Mammary epithelial cell (primary cell): ENCODE measurements at regions of chr12 and their contacts with region 1.

Region 1: DNA sequence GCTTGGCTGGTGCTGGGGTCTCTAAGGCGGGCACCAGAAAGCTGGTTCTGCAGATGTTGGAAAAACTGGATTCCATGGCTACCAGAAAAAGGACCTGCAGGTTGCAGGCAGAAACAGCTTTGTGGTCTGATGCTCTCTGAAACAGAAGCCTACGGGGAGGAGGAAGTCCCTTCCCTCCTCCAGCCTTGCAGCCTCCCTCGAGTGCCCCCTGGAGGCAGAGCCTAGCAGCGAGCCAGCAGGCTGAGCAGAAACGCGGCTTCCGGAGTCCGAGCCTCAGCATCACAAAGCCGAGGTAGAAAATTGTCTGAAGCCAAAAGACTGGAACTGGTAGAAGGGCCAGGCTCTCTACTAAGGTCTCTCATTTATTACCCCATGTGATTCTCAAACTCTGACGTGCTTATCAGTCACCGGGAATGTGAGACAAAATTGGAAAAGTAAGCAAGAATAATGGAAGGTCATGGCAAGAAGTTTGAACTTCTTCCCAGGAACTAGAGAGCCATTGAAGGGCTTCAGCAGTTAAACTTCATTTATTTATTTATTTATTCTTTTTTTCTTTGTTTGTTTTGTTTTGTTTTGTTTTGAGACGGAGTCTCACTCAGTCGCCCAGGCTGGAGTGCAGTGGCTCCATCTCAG is 82.2 kb upstream of the CPSF6 start:
- DNase-seq: peak; percentile 67
- H3K4me3 ChIP-seq: no peak overlapping the region
- H3K27ac ChIP-seq: no peak overlapping the region
- H3K4me1 ChIP-seq: no peaks in the 10 kb centered on the region
- H3K27me3 ChIP-seq: no peaks in the 10 kb centered on the region
- CTCF ChIP-seq: peak; percentile 97 to 99

Region 2: DNA sequence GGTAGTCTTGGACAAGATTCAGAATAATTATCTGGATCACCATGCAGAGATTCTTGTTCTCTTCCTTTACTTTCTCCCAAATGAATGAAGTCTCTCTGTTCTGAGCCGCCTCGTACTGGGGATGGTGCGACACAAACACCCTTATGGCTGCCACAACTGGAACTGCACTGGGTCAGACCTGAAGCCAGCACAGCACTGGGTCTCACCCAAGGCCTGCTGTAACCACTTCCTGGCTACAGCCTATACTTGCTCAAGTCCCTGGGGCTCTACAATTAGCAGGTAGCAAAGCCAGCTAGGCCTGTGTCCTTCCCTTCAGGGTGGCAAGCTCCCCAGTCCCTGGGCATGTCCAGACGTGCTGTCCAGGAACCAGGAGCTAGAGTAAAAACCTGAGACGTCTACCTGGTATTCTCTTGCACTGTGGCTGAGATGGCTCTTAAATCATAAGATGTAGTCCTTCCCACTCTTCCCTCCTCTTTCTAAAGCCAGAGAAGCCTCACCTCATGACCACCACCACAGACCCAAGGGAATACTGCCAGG is 1025.2 kb before region 1 on chr12:
- CTCF ChIA-PET with region 1: no interaction called
- dilution Hi-C with region 1: no loop called
- in situ Hi-C with region 1: no loop called
- intact Hi-C with region 1: no loop called
- DNase-seq: peak; percentile 71
- H3K4me3 ChIP-seq: no peak overlapping the region
- H3K27ac ChIP-seq: no peak overlapping the region
- H3K4me1 ChIP-seq: peaks cover 15% of the 10 kb centered on the region
- H3K27me3 ChIP-seq: no peaks in the 10 kb centered on the region
- CTCF ChIP-seq: no peak

Region 3: GRCh38 chr12:68865399-68866164 is 291.6 kb before region 1 on chr12:
- CTCF ChIA-PET with region 1: no interaction called
- dilution Hi-C with region 1: no loop called
- in situ Hi-C with region 1: no loop called
- intact Hi-C with region 1: loop called (anchors 2 kb)
- DNase-seq: no peak
- H3K4me3 ChIP-seq: no peak overlapping the region
- H3K27ac ChIP-seq: no peak overlapping the region
- H3K4me1 ChIP-seq: peaks cover 6% of the 10 kb centered on the region
- H3K27me3 ChIP-seq: no peaks in the 10 kb centered on the region
- CTCF ChIP-seq: no peak

Region 4: GRCh38 chr12:69123919-69124638 is 33.1 kb before region 1 on chr12:
- CTCF ChIA-PET with region 1: no interaction called
- dilution Hi-C with region 1: no loop called
- in situ Hi-C with region 1: no loop called
- intact Hi-C with region 1: no loop called
- DNase-seq: no peak
- H3K4me3 ChIP-seq: no peak overlapping the region
- H3K27ac ChIP-seq: no peak overlapping the region
- H3K4me1 ChIP-seq: no peaks in the 10 kb centered on the region
- H3K27me3 ChIP-seq: peaks cover 3% of the 10 kb centered on the region
- CTCF ChIP-seq: no peak

Region 5: GRCh38 chr12:69254046-69254445 is 96.9 kb after region 1 on chr12:
- CTCF ChIA-PET with region 1: interaction called, 8 read pairs
- dilution Hi-C with region 1: no loop called
- in situ Hi-C with region 1: no loop called
- intact Hi-C with region 1: loop called (anchors 1 kb)
- DNase-seq: peak; percentile 21
- H3K4me3 ChIP-seq: no peak overlapping the region
- H3K27ac ChIP-seq: no peak overlapping the region
- H3K4me1 ChIP-seq: no peaks in the 10 kb centered on the region
- H3K27me3 ChIP-seq: no peaks in the 10 kb centered on the region
- CTCF ChIP-seq: peak; percentile 56 to 59

Region 6: DNA sequence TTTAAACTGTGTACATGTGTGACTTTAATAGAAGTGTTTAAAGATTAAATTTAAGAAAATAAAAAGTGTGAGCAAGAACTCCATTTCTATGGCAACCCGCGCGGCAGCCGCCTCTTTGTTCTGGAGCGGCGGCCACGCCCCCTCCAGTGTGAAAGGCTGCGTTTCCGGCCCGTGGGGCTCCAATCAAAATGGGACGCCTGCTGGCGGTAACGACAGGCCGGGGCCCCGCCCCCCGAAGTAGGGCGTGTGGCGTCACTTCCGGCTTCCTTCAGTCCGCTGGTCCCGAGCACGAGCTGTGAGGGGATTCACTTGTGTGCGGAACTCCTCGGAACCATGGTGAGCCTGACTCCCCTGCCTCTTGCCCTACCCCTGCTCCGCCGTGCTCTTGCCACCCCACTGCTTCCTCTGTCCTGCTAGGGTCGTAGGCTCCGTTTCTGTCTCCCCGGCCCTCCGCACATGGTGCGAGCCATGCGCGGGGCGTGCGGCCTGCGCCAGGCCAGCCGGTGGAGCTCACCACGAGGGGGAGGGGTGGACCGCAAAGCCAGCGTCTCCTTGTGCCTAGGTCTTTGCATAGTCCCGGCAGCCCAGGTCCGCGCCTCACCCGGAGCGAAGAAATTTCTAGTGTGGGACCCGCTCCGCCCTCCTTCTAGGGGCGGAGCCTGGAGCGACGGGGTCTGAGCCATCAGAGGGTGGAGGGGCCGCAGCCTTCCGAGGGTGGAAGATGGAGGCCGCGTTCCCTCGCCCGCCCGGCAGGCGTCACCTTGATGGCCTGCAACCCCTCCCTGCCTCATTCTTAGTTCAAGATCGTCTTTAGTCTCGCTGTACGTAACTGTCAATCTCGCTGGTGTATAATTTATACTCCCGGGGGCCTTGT is 428.3 kb after region 1 on chr12 and contains the start of gene CCT2:
- CTCF ChIA-PET with region 1: no interaction called
- dilution Hi-C with region 1: no loop called
- in situ Hi-C with region 1: no loop called
- intact Hi-C with region 1: loop called (anchors 5 kb)
- DNase-seq: peak; percentile 90
- H3K4me3 ChIP-seq: peak within 1 kb of the TSS; percentile 75 to 96 (median 80)
- H3K27ac ChIP-seq: peak within 1 kb of the TSS; percentile 94
- H3K4me1 ChIP-seq: peaks cover 4% of the 10 kb centered on the region
- H3K27me3 ChIP-seq: no peaks in the 10 kb centered on the region
- CTCF ChIP-seq: peak in 1 of 2 donors; percentile 43
- total RNA-seq, gene CCT2: 208 to 237 TPM